ENCODE measurements at regions of chr3 and their contacts with region 1.

Region 1: DNA sequence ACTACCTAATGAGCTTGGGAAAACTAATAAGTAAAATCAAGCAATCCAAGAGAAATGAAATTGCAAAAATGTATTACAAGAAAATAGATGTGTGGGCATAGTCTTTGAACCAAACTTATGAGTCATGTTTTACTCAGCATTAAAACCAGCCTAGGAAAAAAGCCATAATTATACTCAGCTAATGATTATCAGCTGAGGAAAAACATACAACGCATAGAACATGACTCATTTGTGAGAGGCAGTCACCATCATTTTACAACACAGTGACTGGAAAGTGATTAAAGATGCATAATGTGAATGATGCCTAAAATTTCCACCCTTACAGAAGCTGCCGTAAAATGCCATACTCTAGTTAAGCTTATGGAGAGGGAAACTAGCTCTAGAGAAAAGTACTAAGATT is 238.0 kb upstream of the EOMES start:
- DNase-seq: no peak
- H3K4me3 Mint-ChIP-seq: no peak overlapping the region
- H3K27ac Mint-ChIP-seq: no peak overlapping the region
- H3K4me1 Mint-ChIP-seq: peaks cover 41% of the 10 kb centered on the region
- H3K27me3 Mint-ChIP-seq: no peaks in the 10 kb centered on the region

Region 2: DNA sequence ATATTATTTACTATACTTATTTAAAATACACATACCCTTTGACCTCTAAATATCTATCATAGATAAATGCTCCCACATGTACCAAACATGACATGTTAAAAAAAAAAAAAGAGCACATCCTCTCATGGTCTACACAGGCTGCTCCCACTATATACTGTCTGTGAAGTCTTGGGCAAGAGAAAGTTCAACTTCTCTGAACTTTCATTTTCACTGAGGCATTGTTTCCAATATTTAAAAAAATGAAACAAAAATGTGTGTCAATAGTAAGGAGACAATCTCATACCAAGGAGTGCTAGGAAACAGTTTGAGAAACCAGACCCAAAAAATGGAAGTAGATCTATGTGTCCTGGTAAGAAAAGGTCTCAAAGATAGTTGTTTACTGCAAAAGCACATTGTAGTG is 505.2 kb before region 1 on chr3:
- intact Hi-C with region 1: no loop called
- DNase-seq: no peak
- H3K4me3 Mint-ChIP-seq: peak overlapping the region; percentile 3
- H3K27ac Mint-ChIP-seq: peak overlapping the region; percentile 85
- H3K4me1 Mint-ChIP-seq: peaks cover 42% of the 10 kb centered on the region
- H3K27me3 Mint-ChIP-seq: no peaks in the 10 kb centered on the region

Region 3: DNA sequence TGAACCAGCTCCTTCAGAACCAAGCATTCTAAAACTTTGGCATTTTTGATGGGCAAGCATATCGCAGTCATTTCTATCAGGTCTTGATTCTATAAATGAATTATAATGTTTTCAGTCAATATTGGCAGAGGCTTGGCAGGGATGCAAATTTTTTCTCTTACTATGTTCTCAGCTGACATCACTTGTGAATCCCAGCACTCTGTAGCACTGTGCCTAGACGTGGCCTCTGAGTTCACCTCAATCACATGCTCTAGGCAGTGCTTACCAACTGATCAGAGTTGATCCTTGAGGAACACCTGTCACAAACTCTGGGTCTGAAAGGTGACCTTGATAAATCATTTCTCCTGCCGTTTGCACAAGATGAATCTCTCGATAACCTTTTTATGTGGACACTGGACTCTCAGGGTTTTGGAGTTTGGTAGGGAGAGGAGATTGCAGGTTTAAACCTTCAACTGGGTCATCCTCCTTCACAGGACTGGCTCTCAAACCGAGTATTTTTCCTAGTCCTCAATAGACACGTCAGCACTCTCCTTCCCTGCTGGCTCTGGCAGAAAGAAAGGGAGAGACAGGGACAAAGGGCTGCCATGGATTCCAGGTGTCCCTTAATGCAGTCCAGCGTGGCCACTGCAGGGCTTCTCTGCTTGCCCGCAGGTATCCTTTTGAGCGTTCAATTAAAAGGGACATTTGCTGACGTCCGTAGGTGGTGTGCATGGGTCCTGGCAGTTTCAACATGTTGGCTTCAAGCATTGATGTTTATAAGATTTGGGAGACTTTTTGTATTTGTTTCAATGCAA is 59.0 kb after region 1 on chr3:
- intact Hi-C with region 1: loop called (anchors 5 kb)
- DNase-seq: no peak
- H3K4me3 Mint-ChIP-seq: no peak overlapping the region
- H3K27ac Mint-ChIP-seq: no peak overlapping the region
- H3K4me1 Mint-ChIP-seq: peaks cover 6% of the 10 kb centered on the region
- H3K27me3 Mint-ChIP-seq: peaks cover 1% of the 10 kb centered on the region

Region 4: DNA sequence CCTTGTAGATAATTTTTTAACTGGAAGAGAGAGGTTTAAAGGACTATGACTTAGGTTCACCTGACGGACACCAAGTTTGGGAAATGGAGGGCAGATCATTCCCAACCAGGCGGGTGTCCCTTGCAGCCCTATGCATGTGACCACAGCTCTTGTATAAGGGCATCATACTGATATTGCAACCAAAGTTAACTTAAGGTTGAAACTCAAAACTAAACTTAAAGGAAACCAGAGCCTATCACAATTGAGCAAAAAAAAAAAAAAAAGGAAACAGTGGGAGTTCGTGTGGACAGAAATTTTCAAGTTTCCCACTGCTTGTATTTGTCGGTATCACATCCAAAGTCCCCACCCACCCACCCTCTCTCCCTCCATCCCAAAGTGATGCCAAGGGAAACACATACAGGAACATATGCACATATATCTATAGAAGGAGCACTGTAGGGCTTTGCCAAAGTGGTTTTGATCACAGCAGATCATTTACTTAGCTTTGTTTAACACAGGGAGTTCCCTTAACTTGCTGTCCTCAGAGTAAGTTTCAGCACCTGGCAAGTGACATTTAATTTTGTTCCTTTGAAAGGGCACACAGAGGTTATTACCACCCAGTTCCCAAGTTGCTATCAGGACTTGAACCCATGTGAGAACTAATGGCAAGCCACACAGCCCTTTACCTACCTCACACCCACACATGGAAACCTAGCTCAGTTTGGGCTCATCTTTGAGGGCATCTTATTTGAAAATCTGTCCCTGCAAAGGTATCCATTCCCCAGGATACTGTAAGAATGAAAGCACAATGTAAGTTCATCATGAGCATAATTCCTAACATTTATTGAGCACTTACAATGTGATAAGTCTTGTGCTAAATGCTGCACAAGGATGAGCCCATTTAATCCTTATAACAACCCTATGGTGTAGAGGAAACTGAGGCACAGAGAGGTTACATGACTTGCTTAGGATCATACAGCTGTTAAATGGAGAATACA is 76.8 kb after region 1 on chr3:
- intact Hi-C with region 1: loop called (anchors 2 kb)
- DNase-seq: no peak
- H3K4me3 Mint-ChIP-seq: no peak overlapping the region
- H3K27ac Mint-ChIP-seq: no peak overlapping the region
- H3K4me1 Mint-ChIP-seq: peaks cover 27% of the 10 kb centered on the region
- H3K27me3 Mint-ChIP-seq: no peaks in the 10 kb centered on the region

Measured in activated T-helper 2 cell treated with anti-CD3 and anti-CD28 coated beads, Interferon-gamma antibody, Interleukin-2, Interleukin-4, amounts not matched to agents 10 μg/mL and 5 μg/mL and 100 μg/mL, durations not matched to agents 14 hours and 24 hours and 36 hours (primary cell).